ENCODE measurements at regions of chr9 and their contacts with region 1.

Region 1: DNA sequence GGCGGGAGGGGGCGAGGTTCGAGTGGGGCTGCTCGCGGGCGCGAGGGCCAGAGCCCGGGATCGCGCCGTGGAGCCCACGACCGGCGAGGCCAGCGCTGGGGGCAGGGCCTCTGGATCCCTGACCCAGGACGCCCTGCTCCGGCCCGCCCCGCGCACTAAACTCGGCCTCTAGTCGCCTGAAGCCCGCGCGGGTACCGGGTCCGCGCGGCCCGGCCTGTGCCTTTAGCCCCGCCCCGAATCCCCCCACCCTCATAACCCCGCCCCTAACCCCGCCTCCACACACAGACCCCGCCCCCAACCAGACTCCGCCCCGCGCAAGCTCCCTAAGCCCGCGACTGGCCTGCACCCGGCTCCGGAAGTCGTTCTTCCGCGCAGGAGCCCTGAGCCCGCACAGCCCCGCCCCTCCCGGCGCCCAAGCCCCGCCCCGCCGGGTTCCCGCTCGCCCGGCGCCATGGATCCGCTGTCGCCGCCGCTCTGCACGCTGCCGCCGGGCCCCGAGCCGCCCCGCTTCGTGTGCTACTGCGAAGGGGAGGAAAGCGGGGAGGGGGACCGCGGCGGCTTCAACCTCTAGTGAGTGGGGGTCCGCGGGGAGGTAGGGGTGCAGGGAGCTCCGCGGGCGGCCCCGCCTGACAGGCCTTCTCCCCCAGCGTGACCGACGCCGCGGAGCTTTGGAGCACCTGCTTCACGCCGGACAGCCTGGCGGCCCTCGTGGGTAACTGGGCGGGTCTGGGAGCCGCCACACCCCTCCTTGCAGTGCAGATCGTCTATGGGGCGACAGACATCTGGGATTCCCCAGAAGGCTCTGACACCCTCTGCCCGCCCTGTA is at the start of gene PAXX:
- DNase-seq: peak; percentile 92
- ATAC-seq: peak; percentile 91
- H3K4me3 ChIP-seq: peak within 1 kb of the TSS; percentile 32 to 71 (median 66)
- H3K4me3 Mint-ChIP-seq: peak within 1 kb of the TSS; percentile 91
- H3K27ac ChIP-seq: peak within 1 kb of the TSS; percentile 76 to 97
- H3K27ac Mint-ChIP-seq: peak within 1 kb of the TSS; percentile 91
- H3K4me1 ChIP-seq: peaks cover 27 to 38% of the 10 kb centered on the region in 2 donors
- H3K4me1 Mint-ChIP-seq: peaks cover 26% of the 10 kb centered on the region
- H3K27me3 ChIP-seq: peaks cover 0 to 3% (median 0%) of the 10 kb centered on the region in 4 experiments
- H3K27me3 Mint-ChIP-seq: peaks cover 6% of the 10 kb centered on the region
- CTCF ChIP-seq: no peak
- total RNA-seq, gene PAXX: 73.0 and 74.8 TPM in 2 replicates

Region 2: DNA sequence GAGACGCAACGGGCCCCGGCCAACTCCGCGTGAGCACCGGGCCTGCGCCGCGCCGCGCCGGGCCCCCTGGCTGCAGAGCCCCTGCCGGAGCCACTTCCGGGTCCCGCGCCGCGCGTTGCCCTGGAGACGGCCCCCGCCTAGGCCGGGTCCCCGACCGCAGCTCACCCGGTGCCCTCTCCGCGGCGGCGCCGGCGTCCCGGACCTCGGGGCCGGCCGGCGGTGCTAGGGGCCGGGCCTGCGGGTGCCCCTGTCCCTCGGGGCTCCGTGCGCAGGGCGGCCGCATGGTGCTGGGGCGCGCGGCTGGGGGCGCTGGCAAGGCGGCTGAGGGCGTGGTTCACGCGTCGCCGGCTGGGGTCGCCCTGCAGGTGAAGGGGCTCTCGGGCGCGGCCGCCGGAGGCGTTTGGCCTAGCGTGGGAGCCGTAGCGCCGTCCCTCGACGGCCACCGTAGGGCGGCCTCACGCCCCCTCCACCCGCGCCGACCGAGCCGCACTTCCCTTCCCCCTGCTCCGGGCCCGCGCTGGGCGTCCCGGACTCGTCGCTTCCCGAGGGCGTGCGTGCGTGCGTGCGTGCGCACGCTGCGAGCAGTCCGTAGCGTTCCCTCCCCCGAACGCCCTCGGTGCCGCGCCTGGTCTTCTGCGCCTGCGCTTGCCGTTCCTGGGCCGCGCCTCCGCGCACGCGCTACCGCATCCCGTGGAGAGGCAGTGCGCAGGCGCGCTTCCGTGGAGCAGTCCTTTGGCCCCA is 873.7 kb before region 1 on chr9 and contains the start of gene TMEM250:
- CTCF ChIA-PET with region 1: no interaction called
- POLR2A ChIA-PET with region 1: no interaction called
- intact Hi-C with region 1: no loop called
- DNase-seq: peak; percentile 99
- ATAC-seq: peak; percentile 87
- H3K4me3 ChIP-seq: peak within 1 kb of the TSS; percentile 32 to 76 (median 64)
- H3K4me3 Mint-ChIP-seq: peak within 1 kb of the TSS; percentile 87
- H3K27ac ChIP-seq: peak within 1 kb of the TSS; percentile 51 to 94
- H3K27ac Mint-ChIP-seq: peak within 1 kb of the TSS; percentile 94
- H3K4me1 ChIP-seq: peaks cover 15 to 29% of the 10 kb centered on the region in 2 donors
- H3K4me1 Mint-ChIP-seq: peaks cover 14% of the 10 kb centered on the region
- H3K27me3 ChIP-seq: no peaks in the 10 kb centered on the region
- H3K27me3 Mint-ChIP-seq: no peaks in the 10 kb centered on the region
- CTCF ChIP-seq: no peak
- total RNA-seq, gene TMEM250: 29.6 and 30.4 TPM in 2 replicates

Region 3: GRCh38 chr9:136855461-136856078 is 136.6 kb before region 1 on chr9:
- CTCF ChIA-PET with region 1: no interaction called
- POLR2A ChIA-PET with region 1: no interaction called
- intact Hi-C with region 1: no loop called
- DNase-seq: peak; percentile 14
- ATAC-seq: no peak
- H3K4me3 ChIP-seq: no peak overlapping the region
- H3K4me3 Mint-ChIP-seq: no peak overlapping the region
- H3K27ac ChIP-seq: no peak overlapping the region
- H3K27ac Mint-ChIP-seq: no peak overlapping the region
- H3K4me1 ChIP-seq: peaks cover 0 to 5% of the 10 kb centered on the region in 2 donors
- H3K4me1 Mint-ChIP-seq: peaks cover 3% of the 10 kb centered on the region
- H3K27me3 ChIP-seq: no peaks in the 10 kb centered on the region
- H3K27me3 Mint-ChIP-seq: no peaks in the 10 kb centered on the region
- CTCF ChIP-seq: no peak

Region 4: GRCh38 chr9:136910901-136911245 is 81.3 kb before region 1 on chr9:
- CTCF ChIA-PET with region 1: no interaction called
- POLR2A ChIA-PET with region 1: no interaction called
- intact Hi-C with region 1: no loop called
- DNase-seq: no peak
- ATAC-seq: peak; percentile 43
- H3K4me3 ChIP-seq: no peak overlapping the region
- H3K4me3 Mint-ChIP-seq: no peak overlapping the region
- H3K27ac ChIP-seq: no peak overlapping the region
- H3K27ac Mint-ChIP-seq: no peak overlapping the region
- H3K4me1 ChIP-seq: peaks cover 0 to 2% of the 10 kb centered on the region in 2 donors
- H3K4me1 Mint-ChIP-seq: peaks cover 6% of the 10 kb centered on the region
- H3K27me3 ChIP-seq: no peaks in the 10 kb centered on the region
- H3K27me3 Mint-ChIP-seq: no peaks in the 10 kb centered on the region
- CTCF ChIP-seq: no peak

Region 5: GRCh38 chr9:136944519-136945279 is 47.5 kb before region 1 on chr9 and contains the starts of genes C8G and FBXW5:
- CTCF ChIA-PET with region 1: interaction called, 10 read pairs
- POLR2A ChIA-PET with region 1: no interaction called
- intact Hi-C with region 1: loop called (anchors 1 kb)
- DNase-seq: peak; percentile 96
- ATAC-seq: peak; percentile 91
- H3K4me3 ChIP-seq: peak within 1 kb of the TSS; percentile 47 to 72 (median 63)
- H3K4me3 Mint-ChIP-seq: peak within 1 kb of the TSS; percentile 80
- H3K27ac ChIP-seq: peak within 1 kb of the TSS in 1 of 2 donors; percentile 48
- H3K27ac Mint-ChIP-seq: peak within 1 kb of the TSS; percentile 87
- H3K4me1 ChIP-seq: peaks cover 11 to 22% of the 10 kb centered on the region in 2 donors
- H3K4me1 Mint-ChIP-seq: peaks cover 12% of the 10 kb centered on the region
- H3K27me3 ChIP-seq: no peaks in the 10 kb centered on the region
- H3K27me3 Mint-ChIP-seq: no peaks in the 10 kb centered on the region
- CTCF ChIP-seq: peak; percentile 90
- total RNA-seq, gene C8G: 1.7 and 2.8 TPM in 2 replicates
- total RNA-seq, gene FBXW5: 99.6 and 102 TPM in 2 replicates

Region 6: GRCh38 chr9:136949817-136950655 is 42.2 kb before region 1 on chr9:
- CTCF ChIA-PET with region 1: interaction called, 10 read pairs
- POLR2A ChIA-PET with region 1: no interaction called
- intact Hi-C with region 1: no loop called
- DNase-seq: peak; percentile 97
- ATAC-seq: peak; percentile 95
- H3K4me3 ChIP-seq: peak overlapping the region; percentile 44 to 65 (median 58)
- H3K4me3 Mint-ChIP-seq: peak overlapping the region; percentile 88
- H3K27ac ChIP-seq: peak overlapping the region; percentile 41 to 72
- H3K27ac Mint-ChIP-seq: peak overlapping the region; percentile 92
- H3K4me1 ChIP-seq: peaks cover 10 to 15% of the 10 kb centered on the region in 2 donors
- H3K4me1 Mint-ChIP-seq: peaks cover 8% of the 10 kb centered on the region
- H3K27me3 ChIP-seq: no peaks in the 10 kb centered on the region
- H3K27me3 Mint-ChIP-seq: no peaks in the 10 kb centered on the region
- CTCF ChIP-seq: peak; percentile 36

Region 7: DNA sequence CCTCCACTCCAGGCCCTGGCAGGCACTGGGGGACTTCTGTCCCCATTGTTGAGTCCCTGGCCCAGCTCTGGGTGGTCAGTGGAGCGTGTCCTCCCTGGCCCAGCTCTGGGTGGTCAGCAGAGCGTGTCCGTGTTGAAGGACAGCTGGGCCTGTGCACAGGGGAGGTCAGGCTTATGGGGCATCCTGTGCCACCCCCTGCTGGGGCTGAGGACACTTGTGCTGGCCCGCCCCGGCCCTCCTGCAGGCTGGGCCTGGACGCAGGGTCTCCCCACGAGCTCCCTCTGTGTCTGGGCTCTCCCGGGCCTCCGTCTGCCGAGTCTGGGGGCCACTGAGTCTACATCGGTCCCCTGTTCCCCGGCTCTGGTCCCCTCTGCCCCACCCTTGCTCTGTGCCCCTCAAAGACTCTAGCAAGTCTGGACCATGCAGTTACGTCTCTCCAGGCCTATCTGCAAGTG is 15.6 kb after region 1 on chr9:
- CTCF ChIA-PET with region 1: no interaction called
- POLR2A ChIA-PET with region 1: no interaction called
- intact Hi-C with region 1: no loop called
- DNase-seq: no peak
- ATAC-seq: no peak
- H3K4me3 ChIP-seq: no peak overlapping the region
- H3K4me3 Mint-ChIP-seq: no peak overlapping the region
- H3K27ac ChIP-seq: no peak overlapping the region
- H3K27ac Mint-ChIP-seq: no peak overlapping the region
- H3K4me1 ChIP-seq: no peaks in the 10 kb centered on the region
- H3K4me1 Mint-ChIP-seq: no peaks in the 10 kb centered on the region
- H3K27me3 ChIP-seq: no peaks in the 10 kb centered on the region
- H3K27me3 Mint-ChIP-seq: no peaks in the 10 kb centered on the region
- CTCF ChIP-seq: no peak

Region 8: DNA sequence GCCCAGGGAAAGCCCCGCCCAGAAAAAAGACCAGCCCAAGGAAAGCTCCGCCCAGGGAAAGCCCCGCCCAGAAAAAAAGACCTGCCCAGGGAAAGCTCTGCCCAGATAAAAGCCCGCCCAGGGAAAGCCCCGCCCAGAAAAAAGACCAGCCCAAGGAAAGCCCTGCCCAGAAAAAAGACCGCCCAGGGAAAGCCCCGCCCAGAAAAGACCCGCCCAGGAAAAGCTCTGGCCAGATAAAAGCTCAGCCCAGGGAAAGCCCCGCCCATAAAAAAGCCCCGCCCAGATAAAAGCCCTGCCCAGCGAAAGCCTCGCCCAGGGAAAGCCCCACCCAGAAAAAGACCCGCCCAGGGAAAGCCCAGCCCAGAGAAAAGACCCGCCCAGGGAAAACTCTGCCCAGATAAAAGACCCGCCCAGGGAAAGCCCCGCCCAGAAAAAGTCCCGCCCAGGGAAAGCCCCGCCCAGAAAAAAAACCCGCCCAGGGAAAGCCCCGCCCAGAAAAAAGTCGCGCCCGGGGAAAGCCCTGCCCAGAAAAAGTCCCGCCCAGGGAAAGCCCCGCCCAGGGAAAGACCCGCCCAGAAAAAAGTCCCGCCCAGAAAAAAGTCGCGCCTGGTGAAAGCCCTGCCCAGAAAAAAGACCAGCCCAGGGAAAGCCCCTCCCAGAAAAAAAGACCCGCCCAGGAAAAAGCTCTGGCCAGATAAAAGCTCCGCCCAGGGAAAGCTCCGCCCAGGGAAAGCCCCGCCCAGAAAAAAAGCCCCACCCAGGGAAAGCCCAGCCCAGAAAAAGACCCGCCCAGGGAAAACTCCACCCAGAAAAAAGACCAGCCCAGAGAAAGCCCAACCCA is 158.6 kb after region 1 on chr9:
- CTCF ChIA-PET with region 1: no interaction called
- POLR2A ChIA-PET with region 1: interaction called, 10 read pairs
- intact Hi-C with region 1: no loop called
- DNase-seq: peak; percentile 77
- ATAC-seq: peak; percentile 55
- H3K4me3 ChIP-seq: no peak overlapping the region
- H3K4me3 Mint-ChIP-seq: no peak overlapping the region
- H3K27ac ChIP-seq: peak overlapping the region; percentile 11 to 84
- H3K27ac Mint-ChIP-seq: peak overlapping the region; percentile 61
- H3K4me1 ChIP-seq: peaks cover 0 to 13% of the 10 kb centered on the region in 2 donors
- H3K4me1 Mint-ChIP-seq: peaks cover 9% of the 10 kb centered on the region
- H3K27me3 ChIP-seq: peaks cover 0 to 21% (median under 1%) of the 10 kb centered on the region in 4 experiments
- H3K27me3 Mint-ChIP-seq: peaks cover 17% of the 10 kb centered on the region
- CTCF ChIP-seq: no peak

Measured in B cell (primary cell).